ENCODE measurements at regions of chr17 and their contacts with region 1.

Region 1: GRCh38 chr17:73192894-73193701 is at the start of gene COG1:
- DNase-seq: peak; percentile 91
- H3K4me3 Mint-ChIP-seq: peak within 1 kb of the TSS; percentile 95
- H3K27ac Mint-ChIP-seq: peak within 1 kb of the TSS; percentile 97
- H3K4me1 Mint-ChIP-seq: peaks cover 16% of the 10 kb centered on the region
- H3K27me3 Mint-ChIP-seq: no peaks in the 10 kb centered on the region
- total RNA-seq, gene COG1: 31.4 to 32.1 TPM

Region 2: GRCh38 chr17:72556944-72557826 is 635.9 kb before region 1 on chr17:
- CTCF ChIA-PET with region 1: no interaction called
- intact Hi-C with region 1: loop called (anchors 1 kb)
- DNase-seq: peak; percentile 80
- H3K4me3 Mint-ChIP-seq: no peak overlapping the region
- H3K27ac Mint-ChIP-seq: no peak overlapping the region
- H3K4me1 Mint-ChIP-seq: no peaks in the 10 kb centered on the region
- H3K27me3 Mint-ChIP-seq: peaks cover 3% of the 10 kb centered on the region

Region 3: GRCh38 chr17:73203135-73203787 is 10.2 kb after region 1 on chr17:
- CTCF ChIA-PET with region 1: interaction called, 5 read pairs
- intact Hi-C with region 1: loop called (anchors 1 kb)
- DNase-seq: peak; percentile 46
- H3K4me3 Mint-ChIP-seq: peak overlapping the region; percentile 38
- H3K27ac Mint-ChIP-seq: peak overlapping the region; percentile 87
- H3K4me1 Mint-ChIP-seq: peaks cover 22% of the 10 kb centered on the region
- H3K27me3 Mint-ChIP-seq: no peaks in the 10 kb centered on the region

Region 4: GRCh38 chr17:73255671-73256181 is 62.6 kb after region 1 on chr17:
- CTCF ChIA-PET with region 1: interaction called, 7 read pairs
- intact Hi-C with region 1: loop called (anchors 1 kb)
- DNase-seq: peak; percentile 68
- H3K4me3 Mint-ChIP-seq: no peak overlapping the region
- H3K27ac Mint-ChIP-seq: no peak overlapping the region
- H3K4me1 Mint-ChIP-seq: no peaks in the 10 kb centered on the region
- H3K27me3 Mint-ChIP-seq: peaks cover 2% of the 10 kb centered on the region

Region 5: GRCh38 chr17:73371285-73371684 is 178.2 kb after region 1 on chr17:
- CTCF ChIA-PET with region 1: interaction called, 3 read pairs
- intact Hi-C with region 1: loop called (anchors 1 kb)
- DNase-seq: no peak
- H3K4me3 Mint-ChIP-seq: no peak overlapping the region
- H3K27ac Mint-ChIP-seq: no peak overlapping the region
- H3K4me1 Mint-ChIP-seq: no peaks in the 10 kb centered on the region
- H3K27me3 Mint-ChIP-seq: peaks cover 4% of the 10 kb centered on the region

Measured in activated naive CD4-positive, alpha-beta T cell treated with anti-CD3 and anti-CD28 coated beads for 36 hours (primary cell).